Right lobe of liver (tissue), 6 donors: ENCODE measurements at regions of chr3 and their contacts with region 1.

Region 1: GRCh38 chr3:50227390-50228183 is 8.4 kb upstream of the GNAI2 start:
- DNase-seq: peak; percentile 94 to 95 (median 95)
- ATAC-seq: peak; percentile 84 to 93 (median 88)
- H3K4me3 ChIP-seq: peak overlapping the region; percentile 71 to 85 (median 72)
- H3K27ac ChIP-seq: peak overlapping the region in 2 of 3 donors; percentile 62 to 65
- H3K4me1 ChIP-seq: peaks cover 0 to 16% (median 0%) of the 10 kb centered on the region in 4 donors
- H3K27me3 ChIP-seq: no peaks in the 10 kb centered on the region
- CTCF ChIP-seq: peak; percentile 86 to 98 (median 93)
- POLR2A ChIP-seq: no peak

Region 2: DNA sequence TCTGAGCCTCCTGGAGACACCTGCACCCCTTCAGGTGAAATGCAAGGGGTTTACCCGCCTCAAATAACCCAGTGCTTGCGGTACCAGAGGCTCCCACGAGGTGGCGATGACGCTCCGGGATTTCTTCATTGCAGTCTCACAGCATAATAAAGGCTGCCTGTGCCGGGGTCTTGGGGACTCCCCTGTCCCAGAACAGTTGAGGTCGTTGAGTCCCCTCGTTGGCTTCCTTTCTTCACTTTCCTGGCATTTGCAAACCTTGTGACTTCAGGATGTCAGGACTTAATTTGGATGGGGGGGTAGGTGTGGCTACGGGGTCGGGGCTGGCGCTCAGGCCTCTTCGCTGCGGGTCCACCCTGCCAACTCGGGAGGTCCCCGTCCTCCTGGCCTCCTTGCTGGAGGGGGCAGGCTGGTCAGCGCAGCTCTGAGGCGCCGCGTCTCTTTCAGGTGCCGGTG is 34.9 kb before region 1 on chr3:
- intact Hi-C with region 1: loop called (anchors 2 to 5 kb)
- DNase-seq: peak in 1 of 3 donors; percentile 53
- ATAC-seq: peak in 1 of 4 donors; percentile 7
- H3K4me3 ChIP-seq: no peak overlapping the region
- H3K27ac ChIP-seq: no peak overlapping the region
- H3K4me1 ChIP-seq: peaks cover 0 to 44% (median 12%) of the 10 kb centered on the region in 4 donors
- H3K27me3 ChIP-seq: no peaks in the 10 kb centered on the region
- CTCF ChIP-seq: peak; percentile 86 to 91 (median 88)
- POLR2A ChIP-seq: no peak

Region 3: GRCh38 chr3:50298836-50299637 is 71.5 kb after region 1 on chr3 and contains the starts of genes HYAL3 and NAA80:
- intact Hi-C with region 1: no loop called
- DNase-seq: peak; percentile 100
- ATAC-seq: peak; percentile 70 to 83 (median 77)
- H3K4me3 ChIP-seq: peak within 1 kb of the TSS; percentile 56 to 62 (median 61)
- H3K27ac ChIP-seq: peak within 1 kb of the TSS; percentile 84 to 96 (median 86)
- H3K4me1 ChIP-seq: peaks cover 0 to 26% (median 14%) of the 10 kb centered on the region in 4 donors
- H3K27me3 ChIP-seq: no peaks in the 10 kb centered on the region
- CTCF ChIP-seq: peak; percentile 21 to 44 (median 34)
- POLR2A ChIP-seq: peak; percentile 97
- total RNA-seq, gene HYAL3: 1.8 to 7.5 (median 3.1) TPM
- total RNA-seq, gene NAA80: 2.5 to 6.2 (median 3.5) TPM

Region 4: DNA sequence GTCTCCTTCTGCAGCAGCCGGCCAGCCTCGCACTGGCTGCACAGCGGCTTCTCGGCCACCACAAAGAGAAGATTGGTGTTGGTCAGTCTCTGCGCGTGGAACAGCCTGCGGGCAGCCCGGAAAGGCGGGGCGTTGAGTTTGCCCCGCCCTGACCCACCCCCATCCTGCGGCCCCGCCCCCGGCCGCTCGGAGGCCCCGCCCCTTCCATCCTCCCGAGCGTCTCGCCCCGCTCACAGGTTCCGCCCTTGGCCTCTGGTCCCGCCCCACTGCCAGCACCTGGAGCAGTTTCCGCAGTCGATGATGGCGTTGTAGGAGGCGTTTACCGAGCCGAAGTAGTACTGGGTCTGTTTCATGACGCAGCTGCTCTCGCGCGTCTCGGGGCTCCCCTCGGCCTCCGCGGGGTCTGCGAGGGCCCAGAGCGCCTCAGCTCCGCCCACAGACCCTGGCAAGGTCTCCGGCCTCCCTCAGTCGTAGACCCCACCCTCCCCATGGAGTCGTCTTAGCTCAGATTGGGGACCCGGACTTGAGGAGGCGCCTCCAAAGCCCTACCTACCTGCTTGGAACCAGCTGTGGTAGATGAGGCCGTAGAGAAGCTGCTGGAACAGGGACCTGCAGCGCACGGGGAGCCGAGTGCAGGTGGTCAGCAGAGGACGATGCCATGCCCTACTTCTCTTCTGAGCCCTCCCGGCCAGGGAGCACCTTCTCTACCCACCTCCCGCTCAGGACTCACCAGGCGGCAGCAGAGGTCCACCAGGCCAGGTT is 137.7 kb after region 1 on chr3:
- intact Hi-C with region 1: no loop called
- DNase-seq: peak; percentile 89 to 95 (median 92)
- ATAC-seq: peak; percentile 88 to 94 (median 90)
- H3K4me3 ChIP-seq: peak overlapping the region; percentile 36 to 58 (median 50)
- H3K27ac ChIP-seq: no peak overlapping the region
- H3K4me1 ChIP-seq: peaks cover 0 to 4% (median 0%) of the 10 kb centered on the region in 4 donors
- H3K27me3 ChIP-seq: no peaks in the 10 kb centered on the region
- CTCF ChIP-seq: no peak
- POLR2A ChIP-seq: no peak